Lower leg skin (tissue), 4 donors: ENCODE measurements at regions of chr4 and their contacts with region 1.

Region 1: GRCh38 chr4:12545813-12546212 is 938.3 kb downstream of the RAB28 start:
- DNase-seq: no peak
- H3K4me3 ChIP-seq: no peak overlapping the region
- CTCF ChIP-seq: no peak
- POLR2A ChIP-seq: no peak

Region 2: GRCh38 chr4:12507868-12508481 is 37.8 kb before region 1 on chr4:
- intact Hi-C with region 1: loop called (anchors 1 kb)
- DNase-seq: no peak
- H3K4me3 ChIP-seq: no peak overlapping the region
- CTCF ChIP-seq: no peak
- POLR2A ChIP-seq: no peak

Region 3: GRCh38 chr4:13570916-13571315 is 1025.1 kb after region 1 on chr4:
- intact Hi-C with region 1: no loop called
- DNase-seq: no peak
- H3K4me3 ChIP-seq: no peak overlapping the region
- CTCF ChIP-seq: no peak
- POLR2A ChIP-seq: no peak